Ascending aorta (tissue), 2 donors: ENCODE measurements at regions of chr7 and their contacts with region 1.

Region 1: DNA sequence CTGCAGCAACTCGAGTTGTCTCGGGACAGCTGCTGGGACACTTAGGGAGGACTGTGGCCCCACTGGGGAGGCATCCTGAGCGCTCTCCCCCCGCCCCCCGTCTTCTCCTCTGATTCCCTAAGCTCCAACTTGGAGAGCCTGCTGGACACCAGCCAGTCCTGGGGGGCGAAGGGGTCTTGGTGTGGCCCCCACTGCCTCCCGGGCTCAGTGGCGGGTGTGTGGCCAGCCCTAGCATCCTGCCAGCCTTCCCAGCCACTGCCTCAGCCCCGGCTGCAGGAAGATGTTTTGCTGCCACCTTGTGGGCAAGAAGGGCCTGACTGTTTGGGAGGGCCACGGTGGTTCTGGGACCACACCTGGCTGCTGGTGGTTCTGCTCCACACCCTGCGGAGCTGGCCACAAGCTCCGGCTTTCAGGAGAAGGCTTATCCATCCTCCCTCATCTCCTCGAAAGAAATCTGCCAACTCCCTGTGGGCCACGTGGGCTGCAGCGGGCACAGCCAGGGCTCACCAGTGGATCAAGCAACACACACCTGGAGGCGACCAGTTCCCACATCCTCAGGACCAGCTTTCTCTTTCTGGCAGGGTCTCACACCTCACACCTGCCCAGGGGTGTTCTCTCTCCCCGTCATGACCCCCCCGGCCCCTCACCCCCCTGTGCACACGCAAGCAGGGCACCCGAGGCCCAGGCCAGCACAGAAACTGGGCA is 24.8 kb downstream of the AGAP3 start:
- DNase-seq: peak in 1 of 2 donors; percentile 87
- H3K4me3 ChIP-seq: no peak overlapping the region
- H3K27ac ChIP-seq: no peak overlapping the region
- H3K4me1 ChIP-seq: peaks cover 0 to 2% of the 10 kb centered on the region in 2 donors
- H3K27me3 ChIP-seq: no peaks in the 10 kb centered on the region
- CTCF ChIP-seq: peak; percentile 69 to 91 (median 90)

Region 2: DNA sequence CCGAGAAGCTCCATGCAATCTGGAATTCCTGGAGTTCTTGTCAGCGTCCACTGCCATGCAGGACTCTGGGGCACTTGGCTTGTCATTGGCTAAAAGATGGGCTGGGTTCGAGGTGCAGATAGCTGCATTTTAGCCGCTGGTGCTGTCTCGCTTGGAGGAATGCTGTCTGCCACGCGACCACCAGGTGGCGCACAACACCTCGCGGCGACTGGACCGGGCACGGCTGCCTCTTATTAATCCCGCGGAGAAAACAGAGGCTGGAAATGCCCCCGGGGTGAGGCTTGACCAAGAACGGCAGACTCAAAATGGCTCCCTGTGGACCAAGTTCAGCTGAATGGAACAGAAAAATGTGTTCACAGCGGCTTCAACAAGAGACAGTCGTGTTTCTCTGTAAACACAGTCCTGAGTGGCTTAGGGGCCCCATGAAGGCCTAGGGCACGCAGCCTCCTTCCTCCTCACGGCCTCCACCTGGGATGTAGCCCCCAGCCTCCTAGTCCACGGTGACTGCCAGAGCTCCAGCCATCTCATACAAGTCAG is 212.6 kb before region 1 on chr7:
- intact Hi-C with region 1: loop called (anchors 1 kb)
- DNase-seq: peak in 1 of 2 donors; percentile 85
- H3K4me3 ChIP-seq: no peak overlapping the region
- H3K27ac ChIP-seq: no peak overlapping the region
- H3K4me1 ChIP-seq: no peaks in the 10 kb centered on the region
- H3K27me3 ChIP-seq: no peaks in the 10 kb centered on the region
- CTCF ChIP-seq: peak; percentile 71 to 97 (median 91)

Region 3: GRCh38 chr7:150962553-150963399 is 148.3 kb before region 1 on chr7:
- intact Hi-C with region 1: loop called (anchors 2 kb)
- DNase-seq: no peak
- H3K4me3 ChIP-seq: no peak overlapping the region
- H3K27ac ChIP-seq: no peak overlapping the region
- H3K4me1 ChIP-seq: no peaks in the 10 kb centered on the region
- H3K27me3 ChIP-seq: no peaks in the 10 kb centered on the region
- CTCF ChIP-seq: peak; percentile 57 to 79 (median 68)

Region 4: GRCh38 chr7:151017953-151018420 is 93.1 kb before region 1 on chr7:
- intact Hi-C with region 1: loop called (anchors 5 kb)
- DNase-seq: peak in 1 of 2 donors; percentile 79
- H3K4me3 ChIP-seq: peak overlapping the region; percentile 35 to 52
- H3K27ac ChIP-seq: no peak overlapping the region
- H3K4me1 ChIP-seq: peaks cover 12 to 15% of the 10 kb centered on the region in 2 donors
- H3K27me3 ChIP-seq: peaks cover 18% of the 10 kb centered on the region
- CTCF ChIP-seq: peak; percentile 70 to 92 (median 90)

Region 5: GRCh38 chr7:151028131-151028947 is 82.8 kb before region 1 on chr7 and contains the start of gene ABCB8:
- intact Hi-C with region 1: loop called (anchors 2 kb)
- DNase-seq: peak; percentile 98 to 100
- H3K4me3 ChIP-seq: peak within 1 kb of the TSS; percentile 68 to 77
- H3K27ac ChIP-seq: peak within 1 kb of the TSS; percentile 60 to 78
- H3K4me1 ChIP-seq: peaks cover 0 to 7% of the 10 kb centered on the region in 2 donors
- H3K27me3 ChIP-seq: no peaks in the 10 kb centered on the region
- CTCF ChIP-seq: peak in 2 of 3 experiments; percentile 59 to 68
- total RNA-seq, gene ABCB8: 50.8 TPM

Region 6: GRCh38 chr7:151057989-151058780 is 52.9 kb before region 1 on chr7:
- intact Hi-C with region 1: loop called (anchors 2 kb)
- DNase-seq: peak; percentile 98 to 100
- H3K4me3 ChIP-seq: peak overlapping the region; percentile 92 to 95
- H3K27ac ChIP-seq: peak overlapping the region; percentile 85 to 95
- H3K4me1 ChIP-seq: peaks cover 21 to 44% of the 10 kb centered on the region in 2 donors
- H3K27me3 ChIP-seq: no peaks in the 10 kb centered on the region
- CTCF ChIP-seq: no peak

Region 7: DNA sequence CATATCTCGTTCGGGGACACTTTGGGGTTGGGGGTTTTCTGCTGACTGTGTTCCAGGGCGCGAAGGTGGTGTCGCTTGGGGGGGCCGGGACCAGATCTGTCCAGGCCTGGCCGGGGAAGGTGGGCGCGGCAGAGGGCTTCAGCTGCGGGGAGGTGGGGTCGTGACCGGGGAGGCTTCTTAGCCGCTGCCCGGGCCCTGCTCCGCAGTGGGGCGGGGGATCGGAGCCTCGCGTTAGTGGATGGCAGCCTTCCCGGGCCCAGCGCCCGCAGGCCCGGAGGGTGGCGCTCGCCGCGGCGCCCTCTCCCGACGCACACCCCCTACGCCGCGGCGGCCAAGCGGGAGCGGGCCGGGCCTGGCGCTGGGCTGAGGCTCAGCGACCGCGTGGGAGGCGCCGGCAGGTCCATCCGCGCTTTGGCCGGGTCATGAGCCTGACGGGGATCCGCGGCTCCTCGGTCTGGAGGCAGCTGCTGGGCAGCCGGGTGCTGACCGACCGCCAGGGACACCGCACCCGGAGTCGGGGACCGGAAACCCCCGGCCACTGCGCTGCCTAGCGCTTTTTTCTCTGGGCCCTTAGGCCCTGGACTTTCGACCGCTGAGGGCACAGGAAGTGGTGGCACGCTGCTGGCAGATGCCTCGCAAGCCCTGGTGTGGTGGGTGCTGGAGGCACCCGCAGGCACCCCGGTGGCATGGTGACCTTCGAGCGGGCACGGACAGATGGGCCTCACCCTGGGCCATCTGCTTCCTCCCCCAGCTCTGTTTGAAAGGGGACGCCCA is 23.7 kb before region 1 on chr7:
- intact Hi-C with region 1: loop called (anchors 1 kb)
- DNase-seq: no peak
- H3K4me3 ChIP-seq: peak overlapping the region; percentile 63 to 85
- H3K27ac ChIP-seq: peak overlapping the region; percentile 64 to 82
- H3K4me1 ChIP-seq: peaks cover 10 to 36% of the 10 kb centered on the region in 2 donors
- H3K27me3 ChIP-seq: no peaks in the 10 kb centered on the region
- CTCF ChIP-seq: peak in 2 of 3 experiments; percentile 10 to 29